Dendritic cell treated with granulocyte-macrophage colony-stimulating factor and Interleukin-4, amounts not matched to agents 40 ng/mL and 50 ng/mL, for 4 days (primary cell): ENCODE measurements at regions of chr15 and their contacts with region 1.

Region 1: GRCh38 chr15:37995461-37996347 is 61.3 kb downstream of the TMCO5A start:
- H3K4me3 Mint-ChIP-seq: no peak overlapping the region
- H3K27ac Mint-ChIP-seq: peak overlapping the region; percentile 53
- H3K4me1 Mint-ChIP-seq: peaks cover 11% of the 10 kb centered on the region
- H3K27me3 Mint-ChIP-seq: peaks cover 8% of the 10 kb centered on the region

Region 2: GRCh38 chr15:38414357-38414756 is 418.7 kb after region 1 on chr15:
- intact Hi-C with region 1: loop called (anchors 2 kb)
- H3K4me3 Mint-ChIP-seq: no peak overlapping the region
- H3K27ac Mint-ChIP-seq: no peak overlapping the region
- H3K4me1 Mint-ChIP-seq: peaks cover 21% of the 10 kb centered on the region
- H3K27me3 Mint-ChIP-seq: peaks cover 4% of the 10 kb centered on the region

Region 3: GRCh38 chr15:38699633-38700230 is 704.0 kb after region 1 on chr15:
- intact Hi-C with region 1: loop called (anchors 5 kb)
- H3K4me3 Mint-ChIP-seq: no peak overlapping the region
- H3K27ac Mint-ChIP-seq: no peak overlapping the region
- H3K4me1 Mint-ChIP-seq: no peaks in the 10 kb centered on the region
- H3K27me3 Mint-ChIP-seq: no peaks in the 10 kb centered on the region